ENCODE measurements at regions of chr2 and their contacts with region 1.

Region 1: GRCh38 chr2:232438951-232439757 is 16.8 kb upstream of the ALPI start:
- DNase-seq: peak; percentile 43
- H3K4me3 Mint-ChIP-seq: no peak overlapping the region
- H3K27ac Mint-ChIP-seq: no peak overlapping the region
- H3K4me1 Mint-ChIP-seq: no peaks in the 10 kb centered on the region
- H3K27me3 Mint-ChIP-seq: peaks cover 10% of the 10 kb centered on the region
- CTCF ChIP-seq: peak; percentile 51

Region 2: DNA sequence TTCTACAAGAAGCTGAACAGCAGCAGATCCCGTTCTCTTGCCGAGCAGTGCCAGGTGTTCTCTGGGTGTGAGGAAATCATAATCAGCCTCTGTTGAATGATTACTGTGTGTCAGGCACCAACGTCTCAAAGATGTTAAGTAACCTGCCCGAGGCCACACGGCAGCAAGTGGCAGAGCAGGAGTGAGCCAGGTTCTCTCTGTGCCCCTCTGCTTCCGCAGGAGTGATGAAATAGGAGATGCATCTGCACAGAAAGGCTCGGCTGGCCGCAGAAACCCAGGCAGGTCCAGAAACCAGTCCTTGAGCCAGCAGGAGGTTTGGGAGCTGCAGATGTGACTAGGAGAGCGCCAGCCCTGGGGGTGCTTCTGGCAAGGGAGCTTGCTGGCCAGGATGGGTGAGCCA is 584.5 kb before region 1 on chr2:
- CTCF ChIA-PET with region 1: interaction called, 9 read pairs
- POLR2A ChIA-PET with region 1: no interaction called
- intact Hi-C with region 1: loop called (anchors 1 kb)
- DNase-seq: peak; percentile 49
- H3K4me3 Mint-ChIP-seq: no peak overlapping the region
- H3K27ac Mint-ChIP-seq: no peak overlapping the region
- H3K4me1 Mint-ChIP-seq: no peaks in the 10 kb centered on the region
- H3K27me3 Mint-ChIP-seq: peaks cover 22% of the 10 kb centered on the region
- CTCF ChIP-seq: no peak

Region 3: GRCh38 chr2:232333361-232334270 is 105.5 kb before region 1 on chr2:
- CTCF ChIA-PET with region 1: interaction called, 48 read pairs
- POLR2A ChIA-PET with region 1: no interaction called
- intact Hi-C with region 1: loop called (anchors 2 kb)
- DNase-seq: peak; percentile 30
- H3K4me3 Mint-ChIP-seq: no peak overlapping the region
- H3K27ac Mint-ChIP-seq: no peak overlapping the region
- H3K4me1 Mint-ChIP-seq: no peaks in the 10 kb centered on the region
- H3K27me3 Mint-ChIP-seq: no peaks in the 10 kb centered on the region
- CTCF ChIP-seq: peak; percentile 55

Measured in MCF 10A (cell line).